ENCODE measurements at regions of chr2 and their contacts with region 1.

Region 1: GRCh38 chr2:178796079-178796677 is 11.0 kb downstream of the TTN start:
- DNase-seq: peak; percentile 45
- ATAC-seq: no peak
- H3K4me3 ChIP-seq: no peak overlapping the region
- H3K27ac ChIP-seq: no peak overlapping the region
- H3K4me1 ChIP-seq: no peaks in the 10 kb centered on the region
- H3K27me3 ChIP-seq: no peaks in the 10 kb centered on the region
- CTCF ChIP-seq: peak; percentile 61; the same call in 1 of the 2 replicates

Region 2: DNA sequence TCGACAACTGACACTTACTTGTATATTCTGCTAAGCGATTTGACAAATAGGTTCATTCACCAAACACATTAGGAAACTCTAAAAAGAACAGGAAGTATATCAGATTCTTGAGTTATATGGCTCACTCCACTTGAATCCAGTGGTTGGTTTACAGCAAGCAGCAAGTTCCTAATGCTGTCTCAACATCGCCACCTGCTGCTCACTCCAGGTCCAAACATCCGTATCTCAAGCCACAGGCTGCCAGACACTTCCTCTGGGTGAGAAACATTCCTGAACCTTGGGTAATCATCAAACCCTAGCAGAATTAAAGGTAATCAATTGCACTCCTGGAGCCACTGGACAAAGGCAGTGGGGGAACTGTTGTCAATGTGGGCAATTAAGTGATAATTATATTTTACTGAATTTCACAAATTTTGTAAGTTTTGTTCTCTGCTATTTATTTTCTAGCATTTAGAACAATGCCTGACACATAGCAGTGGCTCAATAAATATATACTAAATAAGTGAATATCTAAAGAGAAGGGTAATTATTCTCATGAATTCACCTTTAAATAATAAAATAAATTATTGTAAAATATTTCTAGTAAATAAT is 118.2 kb after region 1 on chr2:
- CTCF ChIA-PET with region 1: no interaction called
- POLR2A ChIA-PET with region 1: no interaction called
- in situ Hi-C with region 1: no loop called
- intact Hi-C with region 1: loop called (anchors 1 kb)
- DNase-seq: peak; percentile 69
- ATAC-seq: peak; percentile 89
- H3K4me3 ChIP-seq: no peak overlapping the region
- H3K27ac ChIP-seq: no peak overlapping the region
- H3K4me1 ChIP-seq: no peaks in the 10 kb centered on the region; the same call in 1 of the 2 replicates
- H3K27me3 ChIP-seq: no peaks in the 10 kb centered on the region
- CTCF ChIP-seq: peak; percentile 88

Region 3: GRCh38 chr2:179129574-179130238 is 333.5 kb after region 1 on chr2:
- CTCF ChIA-PET with region 1: interaction called, 4 read pairs
- POLR2A ChIA-PET with region 1: no interaction called
- in situ Hi-C with region 1: no loop called
- intact Hi-C with region 1: loop called (anchors 10 kb)
- DNase-seq: peak; percentile 12
- ATAC-seq: no peak
- H3K4me3 ChIP-seq: no peak overlapping the region
- H3K27ac ChIP-seq: no peak overlapping the region
- H3K4me1 ChIP-seq: no peaks in the 10 kb centered on the region
- H3K27me3 ChIP-seq: no peaks in the 10 kb centered on the region
- CTCF ChIP-seq: peak; percentile 70; the same call in 1 of the 2 replicates

Measured in Panc1 (cell line).